CD14-positive monocyte (primary cell): ENCODE measurements at regions of chr12 and their contacts with region 1.

Region 1: GRCh38 chr12:122681814-122682213 is 21.3 kb downstream of the HCAR2 start:
- DNase-seq: peak; percentile 86 to 95 (median 87)
- H3K4me3 ChIP-seq: no peak overlapping the region
- H3K4me3 Mint-ChIP-seq: peak overlapping the region; percentile 34 to 64
- H3K27ac ChIP-seq: peak overlapping the region; percentile 13 to 69
- H3K27ac Mint-ChIP-seq: peak overlapping the region; percentile 75 to 90 (median 85)
- H3K4me1 ChIP-seq: peaks cover 38 to 41% of the 10 kb centered on the region in 2 donors
- H3K4me1 Mint-ChIP-seq: peaks cover 40% of the 10 kb centered on the region
- H3K27me3 ChIP-seq: peaks cover 0 to 2% of the 10 kb centered on the region in 2 donors
- H3K27me3 Mint-ChIP-seq: peaks cover 2 to 21% (median 8%) of the 10 kb centered on the region in 3 donors
- CTCF ChIP-seq: no peak

Region 2: DNA sequence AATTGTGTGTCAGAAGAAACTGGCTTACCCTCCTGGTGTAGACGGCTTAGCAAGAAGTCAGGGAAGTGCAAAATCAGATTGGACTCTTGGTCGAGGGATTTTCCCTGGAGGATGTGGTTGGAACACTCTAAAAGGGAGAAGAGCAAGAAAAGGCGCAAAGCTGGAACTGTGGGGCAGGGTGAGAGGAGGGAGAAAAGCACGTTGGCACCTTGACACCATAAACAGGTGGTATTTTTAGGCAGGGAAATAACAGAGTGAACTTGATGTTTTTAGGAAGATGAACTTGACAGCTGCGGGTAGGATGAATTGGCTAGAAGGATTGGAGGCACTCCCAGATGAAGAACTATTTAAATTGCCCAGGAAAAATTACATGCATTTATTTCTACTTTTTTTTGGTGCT is 46.3 kb before region 1 on chr12:
- intact Hi-C with region 1: loop called (anchors 5 to 10 kb)
- DNase-seq: no peak
- H3K4me3 ChIP-seq: no peak overlapping the region
- H3K4me3 Mint-ChIP-seq: no peak overlapping the region
- H3K27ac ChIP-seq: no peak overlapping the region
- H3K27ac Mint-ChIP-seq: peak overlapping the region in 2 of 7 donors; percentile 3 to 29
- H3K4me1 ChIP-seq: no peaks in the 10 kb centered on the region
- H3K4me1 Mint-ChIP-seq: peaks cover 2% of the 10 kb centered on the region
- H3K27me3 ChIP-seq: no peaks in the 10 kb centered on the region
- H3K27me3 Mint-ChIP-seq: peaks cover 0 to 3% (median 0%) of the 10 kb centered on the region in 3 donors
- CTCF ChIP-seq: no peak

Region 3: GRCh38 chr12:122646517-122647217 is 35.1 kb before region 1 on chr12:
- intact Hi-C with region 1: loop called in 1 of 2 experiments (anchors 5 kb)
- DNase-seq: peak; percentile 96 to 99 (median 98)
- H3K4me3 ChIP-seq: peak overlapping the region; percentile 41 to 61 (median 51)
- H3K4me3 Mint-ChIP-seq: peak overlapping the region; percentile 42 to 91
- H3K27ac ChIP-seq: peak overlapping the region; percentile 89 to 93
- H3K27ac Mint-ChIP-seq: peak overlapping the region; percentile 94 to 100 (median 99)
- H3K4me1 ChIP-seq: peaks cover 36 to 42% of the 10 kb centered on the region in 2 donors
- H3K4me1 Mint-ChIP-seq: peaks cover 52% of the 10 kb centered on the region
- H3K27me3 ChIP-seq: no peaks in the 10 kb centered on the region
- H3K27me3 Mint-ChIP-seq: peaks cover 0 to 3% (median 0%) of the 10 kb centered on the region in 3 donors
- CTCF ChIP-seq: no peak

Region 4: DNA sequence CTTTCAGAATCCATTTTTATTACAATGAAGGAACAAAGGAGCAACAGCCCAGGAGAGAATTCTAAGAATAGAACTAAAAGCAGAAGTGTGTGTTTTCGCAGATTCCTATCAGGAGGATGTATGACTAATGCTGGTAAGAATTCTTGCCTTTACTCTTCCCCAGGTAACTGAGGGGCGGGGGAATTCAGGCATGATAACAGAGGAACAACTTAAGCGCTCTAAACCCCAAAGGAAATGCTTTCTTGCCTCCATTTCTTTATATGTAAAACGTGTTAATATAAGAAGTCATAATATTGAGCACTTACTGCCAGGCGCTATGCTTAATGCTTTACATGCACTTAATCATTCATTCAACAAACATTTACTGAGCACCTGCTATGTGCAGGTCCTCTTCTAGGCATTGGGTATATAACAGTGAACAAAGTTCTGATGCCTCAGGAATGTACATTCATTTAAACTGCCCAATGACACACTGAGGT is 44.3 kb after region 1 on chr12:
- intact Hi-C with region 1: loop called in 1 of 2 experiments (anchors 10 kb)
- DNase-seq: peak; percentile 56 to 89 (median 87)
- H3K4me3 ChIP-seq: peak overlapping the region in 2 of 3 experiments; percentile 10 to 60
- H3K4me3 Mint-ChIP-seq: peak overlapping the region; percentile 54 to 85
- H3K27ac ChIP-seq: peak overlapping the region in 1 of 2 donors; percentile 79
- H3K27ac Mint-ChIP-seq: peak overlapping the region; percentile 89 to 97 (median 92)
- H3K4me1 ChIP-seq: peaks cover 43 to 49% of the 10 kb centered on the region in 2 donors
- H3K4me1 Mint-ChIP-seq: peaks cover 38% of the 10 kb centered on the region
- H3K27me3 ChIP-seq: peaks cover 0 to 5% of the 10 kb centered on the region in 2 donors
- H3K27me3 Mint-ChIP-seq: peaks cover 5 to 6% (median 6%) of the 10 kb centered on the region in 3 donors
- CTCF ChIP-seq: no peak